Calu3 (cell line): ENCODE measurements at regions of chr5 and their contacts with region 1.

Region 1: DNA sequence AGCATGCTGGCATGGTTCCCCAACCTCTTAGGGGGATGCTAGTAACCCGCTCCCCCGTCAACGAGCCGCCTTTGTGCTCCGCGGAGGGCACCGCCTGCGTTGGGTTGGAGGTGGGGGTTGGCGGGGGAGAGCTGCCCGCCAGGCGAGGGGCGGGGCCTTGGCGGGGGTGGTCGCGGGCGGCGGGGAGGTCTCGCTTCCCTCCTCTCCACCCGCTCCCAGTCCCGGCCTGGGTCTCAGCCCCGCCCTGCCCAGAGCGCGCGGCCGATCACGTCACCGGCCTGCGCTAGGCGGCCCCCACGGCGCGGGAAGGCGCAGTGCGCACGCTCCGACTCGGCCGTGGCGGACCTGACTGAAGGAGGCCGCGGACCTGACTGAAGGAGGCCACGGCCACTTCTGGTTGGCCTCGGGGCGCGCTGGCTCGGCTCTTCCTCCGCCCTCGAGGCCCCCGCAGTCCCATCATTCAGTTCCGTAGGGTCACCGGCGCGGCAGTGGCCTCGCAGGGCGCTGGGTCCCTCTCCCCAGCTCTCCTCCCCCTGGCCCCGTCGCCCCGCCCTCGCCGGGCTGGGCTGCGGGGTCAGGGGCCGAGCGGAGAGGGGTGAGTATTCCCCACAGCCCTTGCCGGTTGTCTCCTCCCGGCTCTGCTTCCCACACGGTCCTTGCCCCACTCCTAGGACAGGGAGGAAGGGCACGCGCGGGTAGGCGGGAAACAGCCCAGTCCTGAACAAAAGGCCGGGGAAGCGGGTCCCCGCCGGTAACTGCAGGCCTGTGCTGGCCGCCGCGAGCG is at the start of gene ATG10:
- DNase-seq: peak; percentile 95
- H3K4me3 Mint-ChIP-seq: peak within 1 kb of the TSS; percentile 77
- H3K27ac Mint-ChIP-seq: peak within 1 kb of the TSS; percentile 87
- H3K4me1 Mint-ChIP-seq: no peaks in the 10 kb centered on the region
- H3K27me3 Mint-ChIP-seq: no peaks in the 10 kb centered on the region
- CTCF ChIP-seq: no peak
- total RNA-seq, gene ATG10: 8.9 and 10.0 TPM in 2 replicates

Region 2: DNA sequence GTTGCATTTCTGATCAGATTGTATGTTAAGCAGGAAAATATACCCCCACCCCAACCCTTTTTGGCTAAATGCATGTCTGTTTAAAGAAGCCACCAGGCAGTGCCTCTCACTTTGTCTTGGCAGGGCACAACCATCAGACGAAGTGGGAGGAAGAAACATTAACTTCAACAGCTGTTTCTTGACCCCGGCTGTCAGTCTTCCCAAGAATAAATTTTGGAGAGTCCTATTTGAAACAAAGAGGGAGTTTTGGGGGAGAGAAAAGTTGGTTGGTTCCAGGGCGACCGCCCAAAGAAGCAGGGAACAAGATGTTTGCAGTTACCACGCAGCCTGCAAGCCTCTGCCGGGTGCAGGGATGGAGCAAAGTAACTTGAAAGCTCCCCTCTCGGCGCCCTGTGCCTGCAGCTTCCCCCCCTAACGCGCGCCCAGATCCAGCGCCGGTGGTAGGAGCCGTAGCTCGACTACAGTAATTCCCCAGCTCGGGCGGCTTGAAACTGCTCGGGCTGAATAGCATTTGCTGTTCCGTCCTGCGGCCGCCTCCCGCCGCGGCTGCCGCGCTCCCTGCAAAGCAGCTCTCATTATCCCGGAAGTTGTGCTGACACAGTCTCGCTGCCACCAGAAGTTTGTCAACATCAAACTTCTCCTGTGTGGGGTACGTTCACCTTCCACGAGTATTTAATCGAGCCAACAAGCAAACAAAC is 120.3 kb before region 1 on chr5:
- CTCF ChIA-PET with region 1: no interaction called
- intact Hi-C with region 1: loop called (anchors 10 kb)
- DNase-seq: peak; percentile 95
- H3K4me3 Mint-ChIP-seq: peak overlapping the region; percentile 72
- H3K27ac Mint-ChIP-seq: peak overlapping the region; percentile 53
- H3K4me1 Mint-ChIP-seq: peaks cover 47% of the 10 kb centered on the region
- H3K27me3 Mint-ChIP-seq: no peaks in the 10 kb centered on the region
- CTCF ChIP-seq: no peak

Region 3: DNA sequence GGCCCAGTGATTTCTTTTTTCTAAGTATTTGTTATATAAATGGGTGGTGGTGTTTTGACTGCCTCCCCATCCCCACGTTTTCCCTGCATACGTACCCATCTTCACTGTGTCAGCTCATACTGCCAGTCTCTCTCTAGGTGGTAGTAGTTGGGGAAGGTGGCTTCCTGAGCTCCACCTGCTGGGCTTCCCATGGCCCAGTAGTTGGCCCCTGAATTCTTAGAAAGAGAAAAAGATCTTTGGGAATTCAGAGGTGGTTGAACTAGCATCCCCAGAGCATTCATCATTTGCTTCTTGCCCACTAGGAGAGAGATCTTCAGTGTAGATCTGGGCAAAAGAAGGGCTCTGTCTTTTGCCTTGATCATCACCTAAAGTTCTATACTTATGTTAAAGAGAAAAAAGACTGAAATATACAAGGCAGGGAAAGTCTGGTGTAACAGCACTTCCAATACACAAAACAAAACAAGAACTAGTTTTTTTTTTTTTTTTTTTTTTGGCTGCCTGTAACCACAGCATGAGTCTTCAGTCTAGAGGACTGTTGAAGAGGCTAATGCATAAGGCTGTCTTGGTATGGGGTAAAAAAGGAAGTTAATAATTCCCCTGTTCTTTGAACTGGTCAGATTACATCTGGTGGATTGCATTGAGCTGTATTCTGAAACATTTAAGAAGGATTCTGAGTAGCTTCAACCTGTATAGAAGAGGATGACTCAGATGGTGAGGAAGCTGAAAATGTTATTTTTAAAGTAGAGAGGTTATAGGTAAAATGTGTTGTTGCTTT is 128.6 kb after region 1 on chr5:
- CTCF ChIA-PET with region 1: no interaction called
- intact Hi-C with region 1: loop called (anchors 5 kb)
- DNase-seq: peak; percentile 7
- H3K4me3 Mint-ChIP-seq: no peak overlapping the region
- H3K27ac Mint-ChIP-seq: peak overlapping the region; percentile 47
- H3K4me1 Mint-ChIP-seq: peaks cover 16% of the 10 kb centered on the region
- H3K27me3 Mint-ChIP-seq: no peaks in the 10 kb centered on the region
- CTCF ChIP-seq: no peak